K562 (cell line): ENCODE measurements at regions of chr1 and their contacts with region 1.

Region 1: DNA sequence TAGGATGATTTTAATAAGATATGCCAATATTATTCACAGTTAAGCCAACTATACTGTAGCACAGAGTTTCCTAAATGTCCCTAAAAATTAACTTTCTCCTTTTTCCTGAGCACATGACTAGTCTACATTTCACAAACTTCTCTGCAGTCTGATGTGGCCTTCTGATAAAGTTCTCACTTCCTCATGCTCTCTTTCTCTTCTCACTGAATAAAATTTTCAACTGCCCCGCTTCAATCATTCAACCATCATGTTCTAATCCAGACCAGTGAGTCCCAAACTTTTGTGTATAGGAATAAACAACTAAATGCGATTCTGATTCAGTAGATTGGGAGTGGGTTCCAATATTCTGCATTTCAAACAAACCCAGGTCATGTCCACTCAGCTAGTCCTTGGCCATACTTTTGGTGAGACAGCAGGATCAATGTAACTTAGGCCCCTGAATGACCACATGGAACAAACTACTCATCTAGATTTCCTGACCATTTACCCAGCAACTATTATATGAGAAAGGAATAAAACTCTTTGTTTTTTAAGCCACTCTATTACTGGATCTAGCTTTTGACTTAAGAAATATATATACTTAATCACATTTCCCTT is 20.1 kb downstream of the TUT4 start:
- DNase-seq: peak in 2 of 4 experiments; percentile 24 to 43
- ATAC-seq: peak; percentile 70
- H3K4me3 ChIP-seq: no peak overlapping the region
- H3K27ac ChIP-seq: peak overlapping the region; percentile 57
- H3K4me1 ChIP-seq: peaks cover 13 to 14% of the 10 kb centered on the region in 2 experiments
- H3K27me3 ChIP-seq: no peaks in the 10 kb centered on the region
- CTCF ChIP-seq: no peak
- EP300 ChIP-seq: no peak
- POLR2A ChIP-seq: no peak
- RAD21 ChIP-seq: no peak

Region 2: GRCh38 chr1:51032902-51033301 is 1499.9 kb before region 1 on chr1:
- CTCF ChIA-PET with region 1: no interaction called
- POLR2A ChIA-PET with region 1: no interaction called
- in situ Hi-C with region 1: no loop called
- intact Hi-C with region 1: no loop called
- DNase-seq: no peak
- ATAC-seq: no peak
- H3K4me3 ChIP-seq: no peak overlapping the region
- H3K27ac ChIP-seq: no peak overlapping the region
- H3K4me1 ChIP-seq: no peaks in the 10 kb centered on the region
- H3K27me3 ChIP-seq: no peaks in the 10 kb centered on the region
- CTCF ChIP-seq: no peak
- EP300 ChIP-seq: no peak
- POLR2A ChIP-seq: no peak
- RAD21 ChIP-seq: no peak

Region 3: GRCh38 chr1:52321061-52321460 is 211.8 kb before region 1 on chr1:
- CTCF ChIA-PET with region 1: no interaction called
- POLR2A ChIA-PET with region 1: no interaction called
- in situ Hi-C with region 1: no loop called
- intact Hi-C with region 1: no loop called
- DNase-seq: no peak
- ATAC-seq: no peak
- H3K4me3 ChIP-seq: no peak overlapping the region
- H3K27ac ChIP-seq: no peak overlapping the region
- H3K4me1 ChIP-seq: no peaks in the 10 kb centered on the region
- H3K27me3 ChIP-seq: no peaks in the 10 kb centered on the region
- CTCF ChIP-seq: no peak
- EP300 ChIP-seq: no peak
- POLR2A ChIP-seq: no peak
- RAD21 ChIP-seq: no peak

Region 4: GRCh38 chr1:52520148-52520547 is 12.7 kb before region 1 on chr1:
- CTCF ChIA-PET with region 1: no interaction called
- POLR2A ChIA-PET with region 1: interaction called, 11 read pairs
- in situ Hi-C with region 1: no loop called
- intact Hi-C with region 1: no loop called
- DNase-seq: no peak
- ATAC-seq: peak; percentile 72
- H3K4me3 ChIP-seq: no peak overlapping the region
- H3K27ac ChIP-seq: no peak overlapping the region
- H3K4me1 ChIP-seq: no peaks in the 10 kb centered on the region
- H3K27me3 ChIP-seq: no peaks in the 10 kb centered on the region
- CTCF ChIP-seq: no peak
- EP300 ChIP-seq: no peak; the same call in 1 of the 2 replicates
- POLR2A ChIP-seq: no peak
- RAD21 ChIP-seq: no peak

Region 5: GRCh38 chr1:52552505-52553361 is 19.9 kb after region 1 on chr1 and contains the start of gene TUT4:
- CTCF ChIA-PET with region 1: no interaction called
- POLR2A ChIA-PET with region 1: interaction called, 4 read pairs
- in situ Hi-C with region 1: no loop called
- intact Hi-C with region 1: loop called (anchors 2 kb)
- DNase-seq: peak; percentile 78 to 92 (median 80)
- ATAC-seq: peak; percentile 85
- H3K4me3 ChIP-seq: peak within 1 kb of the TSS; percentile 77
- H3K27ac ChIP-seq: peak within 1 kb of the TSS; percentile 87
- H3K4me1 ChIP-seq: peaks cover 9 to 19% of the 10 kb centered on the region in 2 experiments; a peak in 3 of 5 replicates
- H3K27me3 ChIP-seq: no peaks in the 10 kb centered on the region
- CTCF ChIP-seq: peak in 1 of 3 experiments; percentile 38; a peak in 3 of 6 replicates
- EP300 ChIP-seq: no peak; the same call in 1 of the 2 replicates
- POLR2A ChIP-seq: peak; percentile 87
- RAD21 ChIP-seq: peak; percentile 46 to 53
- polyA plus RNA-seq, gene TUT4: 15.8 to 21.3 TPM

Region 6: GRCh38 chr1:53959664-53960250 is 1426.9 kb after region 1 on chr1:
- CTCF ChIA-PET with region 1: no interaction called
- POLR2A ChIA-PET with region 1: no interaction called
- in situ Hi-C with region 1: no loop called
- intact Hi-C with region 1: no loop called
- DNase-seq: peak in 3 of 4 experiments; percentile 35 to 45 (median 43)
- ATAC-seq: peak; percentile 76
- H3K4me3 ChIP-seq: no peak overlapping the region
- H3K27ac ChIP-seq: no peak overlapping the region
- H3K4me1 ChIP-seq: peaks cover 0 to 28% of the 10 kb centered on the region in 2 experiments; a peak in 3 of 5 replicates
- H3K27me3 ChIP-seq: no peaks in the 10 kb centered on the region
- CTCF ChIP-seq: peak; percentile 64 to 87 (median 87); a peak in 5 of 6 replicates
- EP300 ChIP-seq: no peak
- POLR2A ChIP-seq: no peak
- RAD21 ChIP-seq: peak; percentile 65 to 83